ENCODE measurements at regions of chr12 and their contacts with region 1.

Region 1: GRCh38 chr12:53036802-53037201 is 13.1 kb upstream of the TNS2 start:
- DNase-seq: no peak
- H3K4me3 ChIP-seq: no peak overlapping the region
- H3K4me3 Mint-ChIP-seq: no peak overlapping the region
- H3K27ac ChIP-seq: no peak overlapping the region
- H3K27ac Mint-ChIP-seq: peak overlapping the region in 2 of 8 donors; percentile 42 to 48
- H3K4me1 ChIP-seq: peaks cover 12% of the 10 kb centered on the region
- H3K4me1 Mint-ChIP-seq: peaks cover 10 to 14% (median 13%) of the 10 kb centered on the region in 3 donors
- H3K27me3 ChIP-seq: no peaks in the 10 kb centered on the region
- H3K27me3 Mint-ChIP-seq: no peaks in the 10 kb centered on the region

Region 2: GRCh38 chr12:53047221-53048042 is 10.6 kb after region 1 on chr12:
- CTCF ChIA-PET with region 1: interaction called, 26 read pairs
- POLR2A ChIA-PET with region 1: no interaction called
- DNase-seq: peak; percentile 63 to 80 (median 72)
- H3K4me3 ChIP-seq: peak overlapping the region; percentile 28
- H3K4me3 Mint-ChIP-seq: peak overlapping the region; percentile 59 to 97 (median 84)
- H3K27ac ChIP-seq: no peak overlapping the region
- H3K27ac Mint-ChIP-seq: peak overlapping the region in 6 of 8 donors; percentile 29 to 87 (median 70)
- H3K4me1 ChIP-seq: peaks cover 7% of the 10 kb centered on the region
- H3K4me1 Mint-ChIP-seq: peaks cover 8 to 21% (median 10%) of the 10 kb centered on the region in 3 donors
- H3K27me3 ChIP-seq: no peaks in the 10 kb centered on the region
- H3K27me3 Mint-ChIP-seq: peaks cover 0 to 1% of the 10 kb centered on the region in 2 donors

Region 3: GRCh38 chr12:53268648-53269562 is 232.1 kb after region 1 on chr12:
- CTCF ChIA-PET with region 1: no interaction called
- POLR2A ChIA-PET with region 1: no interaction called
- DNase-seq: no peak
- H3K4me3 ChIP-seq: peak overlapping the region; percentile 83
- H3K4me3 Mint-ChIP-seq: peak overlapping the region; percentile 88 to 99 (median 94)
- H3K27ac ChIP-seq: peak overlapping the region; percentile 67
- H3K27ac Mint-ChIP-seq: peak overlapping the region; percentile 51 to 99 (median 90)
- H3K4me1 ChIP-seq: peaks cover 13% of the 10 kb centered on the region
- H3K4me1 Mint-ChIP-seq: peaks cover 16 to 21% (median 20%) of the 10 kb centered on the region in 3 donors
- H3K27me3 ChIP-seq: no peaks in the 10 kb centered on the region
- H3K27me3 Mint-ChIP-seq: no peaks in the 10 kb centered on the region

Measured in CD8-positive, alpha-beta memory T cell (primary cell).